ENCODE measurements at regions of chr12 and their contacts with region 1.

Region 1: GRCh38 chr12:57213058-57213715 is 3.4 kb upstream of the NXPH4 start:
- DNase-seq: peak; percentile 61
- ATAC-seq: peak; percentile 62
- H3K4me3 ChIP-seq: no peak overlapping the region
- H3K27ac ChIP-seq: no peak overlapping the region
- H3K4me1 ChIP-seq: peaks cover 20% of the 10 kb centered on the region
- H3K27me3 ChIP-seq: peaks cover 10% of the 10 kb centered on the region
- CTCF ChIP-seq: peak; percentile 97

Region 2: GRCh38 chr12:57182921-57183790 is 30.0 kb before region 1 on chr12:
- CTCF ChIA-PET with region 1: interaction called, 15 read pairs
- POLR2A ChIA-PET with region 1: no interaction called
- in situ Hi-C with region 1: no loop called
- intact Hi-C with region 1: no loop called
- DNase-seq: peak; percentile 59
- ATAC-seq: peak; percentile 95
- H3K4me3 ChIP-seq: no peak overlapping the region
- H3K27ac ChIP-seq: no peak overlapping the region
- H3K4me1 ChIP-seq: no peaks in the 10 kb centered on the region
- H3K27me3 ChIP-seq: no peaks in the 10 kb centered on the region
- CTCF ChIP-seq: peak; percentile 94

Region 3: DNA sequence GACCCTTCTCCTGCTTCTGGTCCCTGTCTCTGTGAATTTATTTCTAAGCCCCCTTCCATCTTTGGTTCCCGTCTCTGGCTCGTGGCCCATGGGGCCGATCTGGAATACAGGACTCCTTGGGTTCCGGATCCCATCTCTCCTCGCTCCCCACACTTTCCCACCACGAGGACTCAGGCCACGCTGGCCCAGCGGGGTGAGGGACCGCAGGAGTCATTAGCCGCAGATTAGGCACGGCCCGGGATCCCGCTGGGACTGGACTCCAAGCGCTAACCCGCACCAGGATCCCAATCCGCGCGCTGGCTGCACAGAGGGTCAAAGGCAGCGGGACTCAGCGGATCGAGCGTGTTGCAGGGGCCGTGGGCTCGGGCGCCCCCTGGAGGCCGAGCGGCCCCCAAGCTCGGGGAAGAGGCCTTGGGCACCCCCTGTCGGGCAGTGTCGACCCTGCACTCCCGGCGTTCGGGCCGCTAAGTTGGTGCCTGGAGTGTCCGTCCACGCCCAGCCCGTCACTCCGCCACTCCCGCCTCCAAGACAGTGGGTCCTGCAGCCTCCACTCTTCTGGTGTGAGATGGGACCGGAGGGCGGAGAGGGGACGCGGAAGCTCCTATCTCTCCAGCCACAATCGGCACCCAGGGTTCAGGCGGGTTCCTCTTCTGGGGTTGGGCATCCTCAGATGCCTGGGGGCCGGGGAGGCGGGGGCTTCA is 25.8 kb after region 1 on chr12:
- CTCF ChIA-PET with region 1: interaction called, 26 read pairs
- POLR2A ChIA-PET with region 1: interaction called, 3 read pairs
- in situ Hi-C with region 1: no loop called
- intact Hi-C with region 1: loop called (anchors 1 kb)
- DNase-seq: peak; percentile 63
- ATAC-seq: peak; percentile 73
- H3K4me3 ChIP-seq: peak overlapping the region; percentile 56 to 67
- H3K27ac ChIP-seq: no peak overlapping the region; the same call in 1 of the 2 replicates
- H3K4me1 ChIP-seq: peaks cover 21% of the 10 kb centered on the region
- H3K27me3 ChIP-seq: peaks cover 2% of the 10 kb centered on the region; the same call in 1 of the 2 replicates
- CTCF ChIP-seq: peak; percentile 100